Mammary epithelial cell (primary cell): ENCODE measurements at regions of chr11 and their contacts with region 1.

Region 1: GRCh38 chr11:29612423-29612822 is 404.4 kb downstream of the KCNA4 start:
- DNase-seq: no peak
- H3K4me3 ChIP-seq: no peak overlapping the region
- H3K27ac ChIP-seq: no peak overlapping the region
- H3K4me1 ChIP-seq: peaks cover 5% of the 10 kb centered on the region
- H3K27me3 ChIP-seq: no peaks in the 10 kb centered on the region
- CTCF ChIP-seq: no peak

Region 2: DNA sequence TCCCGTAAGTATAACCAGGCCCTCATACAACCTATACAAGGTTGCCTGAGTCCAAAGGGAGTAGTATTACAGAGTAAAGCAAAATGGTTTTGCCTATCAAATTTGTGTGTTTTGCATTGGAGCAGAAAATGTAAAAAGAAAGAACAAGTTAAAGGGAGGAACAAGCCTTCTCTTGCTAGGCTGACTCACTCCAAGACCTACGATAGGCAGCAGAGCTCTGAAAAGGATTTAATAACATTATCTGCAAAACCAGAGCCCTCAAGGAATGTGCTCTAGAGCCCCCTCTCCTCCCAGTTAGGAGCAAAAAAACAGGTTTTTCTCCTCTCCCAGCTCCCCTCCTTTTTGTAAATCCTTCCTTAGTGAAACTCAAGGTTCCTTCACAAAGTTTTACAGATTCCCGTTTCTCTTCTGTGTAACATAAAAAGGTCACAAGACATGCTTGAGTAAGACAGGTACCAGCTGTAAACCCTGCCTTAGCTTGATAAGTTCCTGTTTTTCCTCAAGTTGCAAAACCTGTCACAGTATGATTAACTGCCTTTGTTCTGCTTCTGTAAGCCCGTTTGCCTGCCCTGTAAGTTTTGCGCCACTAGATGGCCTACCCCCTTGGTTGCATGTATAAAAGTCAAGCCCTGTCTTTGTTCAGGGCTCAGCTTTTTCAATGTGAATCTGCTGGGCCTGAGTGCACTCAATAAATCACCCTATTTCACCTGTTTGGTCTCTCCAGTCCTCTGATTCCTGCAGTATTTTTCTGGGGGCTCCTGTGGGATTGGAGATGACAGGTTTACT is 93.8 kb before region 1 on chr11:
- CTCF ChIA-PET with region 1: no interaction called
- dilution Hi-C with region 1: no loop called
- in situ Hi-C with region 1: no loop called
- intact Hi-C with region 1: no loop called
- DNase-seq: peak; percentile 50
- H3K4me3 ChIP-seq: no peak overlapping the region
- H3K27ac ChIP-seq: no peak overlapping the region
- H3K4me1 ChIP-seq: no peaks in the 10 kb centered on the region
- H3K27me3 ChIP-seq: no peaks in the 10 kb centered on the region
- CTCF ChIP-seq: peak; percentile 28 to 47

Region 3: GRCh38 chr11:29553990-29554389 is 58.4 kb before region 1 on chr11:
- CTCF ChIA-PET with region 1: no interaction called
- dilution Hi-C with region 1: no loop called
- in situ Hi-C with region 1: no loop called
- intact Hi-C with region 1: no loop called
- DNase-seq: no peak
- H3K4me3 ChIP-seq: no peak overlapping the region
- H3K27ac ChIP-seq: no peak overlapping the region
- H3K4me1 ChIP-seq: no peaks in the 10 kb centered on the region
- H3K27me3 ChIP-seq: peaks cover 2% of the 10 kb centered on the region
- CTCF ChIP-seq: no peak

Region 4: DNA sequence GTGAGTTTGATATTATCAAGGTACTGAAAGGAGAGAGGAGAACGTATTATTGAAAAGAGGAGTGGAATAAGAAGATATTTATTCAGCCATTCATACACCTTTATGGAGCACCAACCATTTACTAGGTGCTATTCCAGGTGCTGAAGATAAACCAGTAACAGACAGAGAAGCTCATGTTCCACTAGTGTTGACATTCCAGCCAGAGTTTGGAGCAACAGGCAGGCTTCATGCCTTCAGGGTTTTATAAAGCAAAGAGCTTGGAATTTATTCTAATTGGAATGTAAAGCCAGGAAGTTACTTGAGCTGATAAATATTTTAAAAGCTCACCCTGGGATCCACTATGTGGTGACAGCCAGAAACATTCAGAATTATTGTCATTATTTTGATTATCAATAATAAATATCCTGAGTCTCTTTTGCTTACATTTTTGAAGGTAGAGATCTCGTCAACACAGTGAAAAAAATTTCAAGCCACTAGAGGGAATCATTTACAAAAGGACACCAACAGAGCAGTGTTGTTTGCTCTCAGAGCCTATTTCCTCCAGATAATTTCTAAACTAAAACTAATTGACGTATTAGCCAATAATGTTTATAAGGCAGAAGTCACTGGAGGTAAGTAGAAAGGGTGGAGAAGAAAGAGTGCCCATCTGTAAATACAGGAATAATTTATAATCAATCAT is 232.4 kb after region 1 on chr11:
- CTCF ChIA-PET with region 1: interaction called, 12 read pairs
- dilution Hi-C with region 1: no loop called
- in situ Hi-C with region 1: no loop called
- intact Hi-C with region 1: no loop called
- DNase-seq: no peak
- H3K4me3 ChIP-seq: no peak overlapping the region
- H3K27ac ChIP-seq: no peak overlapping the region
- H3K4me1 ChIP-seq: no peaks in the 10 kb centered on the region
- H3K27me3 ChIP-seq: no peaks in the 10 kb centered on the region
- CTCF ChIP-seq: no peak

Region 5: GRCh38 chr11:29879560-29879959 is 267.1 kb after region 1 on chr11:
- CTCF ChIA-PET with region 1: no interaction called
- dilution Hi-C with region 1: no loop called
- in situ Hi-C with region 1: no loop called
- intact Hi-C with region 1: no loop called
- DNase-seq: no peak
- H3K4me3 ChIP-seq: no peak overlapping the region
- H3K27ac ChIP-seq: no peak overlapping the region
- H3K4me1 ChIP-seq: no peaks in the 10 kb centered on the region
- H3K27me3 ChIP-seq: no peaks in the 10 kb centered on the region
- CTCF ChIP-seq: no peak

Region 6: GRCh38 chr11:29937526-29937925 is 325.1 kb after region 1 on chr11:
- CTCF ChIA-PET with region 1: no interaction called
- dilution Hi-C with region 1: no loop called
- in situ Hi-C with region 1: no loop called
- intact Hi-C with region 1: no loop called
- DNase-seq: no peak
- H3K4me3 ChIP-seq: no peak overlapping the region
- H3K27ac ChIP-seq: no peak overlapping the region
- H3K4me1 ChIP-seq: no peaks in the 10 kb centered on the region
- H3K27me3 ChIP-seq: no peaks in the 10 kb centered on the region
- CTCF ChIP-seq: no peak